HCT116 (cell line): ENCODE measurements at regions of chr20 and their contacts with region 1.

Region 1: DNA sequence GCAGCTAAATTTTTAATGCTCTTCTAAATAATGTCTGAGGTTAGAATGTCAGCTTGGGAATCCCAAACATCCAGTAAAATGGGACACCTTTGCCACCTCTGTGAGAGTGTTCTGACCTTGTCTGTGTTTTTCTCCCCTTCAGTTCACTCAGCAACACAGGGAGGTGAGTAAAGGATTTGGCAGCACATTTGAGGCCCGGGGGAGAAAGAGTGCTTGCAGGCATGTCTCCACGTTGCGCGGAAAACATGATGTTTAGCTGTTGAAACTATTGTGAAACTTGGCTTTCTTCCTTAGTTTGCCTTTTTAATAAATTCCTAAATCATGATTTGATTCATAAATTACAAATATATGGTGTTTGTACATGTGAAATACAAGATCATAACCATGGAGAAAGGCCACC is 707.8 kb upstream of the FLRT3 start:
- DNase-seq: no peak
- ATAC-seq: no peak
- H3K4me3 ChIP-seq: no peak overlapping the region
- H3K27ac ChIP-seq: no peak overlapping the region
- H3K4me1 ChIP-seq: no peaks in the 10 kb centered on the region
- H3K27me3 ChIP-seq: no peaks in the 10 kb centered on the region
- CTCF ChIP-seq: no peak
- POLR2A ChIP-seq: no peak
- RAD21 ChIP-seq: no peak

Region 2: GRCh38 chr20:14807224-14807623 is 238.0 kb before region 1 on chr20:
- CTCF ChIA-PET with region 1: no interaction called
- POLR2A ChIA-PET with region 1: no interaction called
- RAD21 ChIA-PET with region 1: no interaction called
- intact Hi-C with region 1: no loop called
- DNase-seq: no peak
- ATAC-seq: no peak
- H3K4me3 ChIP-seq: no peak overlapping the region
- H3K27ac ChIP-seq: no peak overlapping the region
- H3K4me1 ChIP-seq: no peaks in the 10 kb centered on the region
- H3K27me3 ChIP-seq: no peaks in the 10 kb centered on the region
- CTCF ChIP-seq: no peak
- POLR2A ChIP-seq: no peak
- RAD21 ChIP-seq: no peak

Region 3: GRCh38 chr20:15065794-15066193 is 20.5 kb after region 1 on chr20:
- CTCF ChIA-PET with region 1: no interaction called
- POLR2A ChIA-PET with region 1: no interaction called
- RAD21 ChIA-PET with region 1: no interaction called
- intact Hi-C with region 1: loop called (anchors 2 kb)
- DNase-seq: no peak
- ATAC-seq: no peak
- H3K4me3 ChIP-seq: no peak overlapping the region
- H3K27ac ChIP-seq: no peak overlapping the region
- H3K4me1 ChIP-seq: no peaks in the 10 kb centered on the region
- H3K27me3 ChIP-seq: no peaks in the 10 kb centered on the region
- CTCF ChIP-seq: no peak
- POLR2A ChIP-seq: no peak
- RAD21 ChIP-seq: no peak